PC-3 (cell line): ENCODE measurements at regions of chr6 and their contacts with region 1.

Region 1: GRCh38 chr6:38283734-38284362 is 355.9 kb downstream of the BTBD9 start:
- DNase-seq: peak; percentile 98
- ATAC-seq: peak; percentile 85
- H3K4me3 ChIP-seq: peak overlapping the region; percentile 7; the same call in 1 of the 2 replicates
- H3K27ac ChIP-seq: peak overlapping the region; percentile 72
- H3K4me1 ChIP-seq: peaks cover 32% of the 10 kb centered on the region
- H3K27me3 ChIP-seq: no peaks in the 10 kb centered on the region
- CTCF ChIP-seq: no peak

Region 2: GRCh38 chr6:38179300-38179699 is 104.5 kb before region 1 on chr6:
- CTCF ChIA-PET with region 1: no interaction called
- POLR2A ChIA-PET with region 1: no interaction called
- intact Hi-C with region 1: loop called (anchors 10 kb)
- DNase-seq: no peak
- ATAC-seq: no peak
- H3K4me3 ChIP-seq: no peak overlapping the region
- H3K27ac ChIP-seq: no peak overlapping the region
- H3K4me1 ChIP-seq: peaks cover 6% of the 10 kb centered on the region
- H3K27me3 ChIP-seq: no peaks in the 10 kb centered on the region
- CTCF ChIP-seq: no peak

Region 3: GRCh38 chr6:38499529-38500096 is 215.8 kb after region 1 on chr6:
- CTCF ChIA-PET with region 1: no interaction called
- POLR2A ChIA-PET with region 1: no interaction called
- intact Hi-C with region 1: no loop called
- DNase-seq: no peak
- ATAC-seq: no peak
- H3K4me3 ChIP-seq: no peak overlapping the region
- H3K27ac ChIP-seq: no peak overlapping the region
- H3K4me1 ChIP-seq: no peaks in the 10 kb centered on the region
- H3K27me3 ChIP-seq: no peaks in the 10 kb centered on the region
- CTCF ChIP-seq: no peak